Panc1 (cell line): ENCODE measurements at regions of chr3 and their contacts with region 1.

Region 1: DNA sequence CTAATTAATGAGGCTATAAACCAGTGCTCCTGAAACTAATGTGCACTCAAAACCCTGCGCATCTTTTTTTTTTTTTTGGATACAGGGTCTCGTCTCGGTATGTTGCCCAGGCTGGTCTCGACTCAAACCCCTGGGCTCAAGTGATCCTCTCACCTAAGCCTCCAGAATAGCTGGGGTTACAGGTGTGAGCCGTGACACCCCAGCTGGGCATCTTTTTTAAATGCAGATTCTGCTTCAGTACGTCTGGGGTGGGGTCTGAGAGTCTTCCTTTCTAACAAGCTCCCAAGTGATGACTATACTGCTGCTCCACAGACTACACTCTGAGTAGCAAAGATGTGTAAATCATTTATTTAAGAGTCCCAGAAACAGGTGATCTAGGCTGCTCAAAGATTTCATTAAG is 73.0 kb downstream of the BFSP2 start:
- DNase-seq: no peak
- ATAC-seq: no peak
- H3K4me3 ChIP-seq: no peak overlapping the region
- H3K27ac ChIP-seq: peak overlapping the region; percentile 4; the same call in 1 of the 2 replicates
- H3K4me1 ChIP-seq: peaks cover 29% of the 10 kb centered on the region
- H3K27me3 ChIP-seq: no peaks in the 10 kb centered on the region
- CTCF ChIP-seq: no peak

Region 2: DNA sequence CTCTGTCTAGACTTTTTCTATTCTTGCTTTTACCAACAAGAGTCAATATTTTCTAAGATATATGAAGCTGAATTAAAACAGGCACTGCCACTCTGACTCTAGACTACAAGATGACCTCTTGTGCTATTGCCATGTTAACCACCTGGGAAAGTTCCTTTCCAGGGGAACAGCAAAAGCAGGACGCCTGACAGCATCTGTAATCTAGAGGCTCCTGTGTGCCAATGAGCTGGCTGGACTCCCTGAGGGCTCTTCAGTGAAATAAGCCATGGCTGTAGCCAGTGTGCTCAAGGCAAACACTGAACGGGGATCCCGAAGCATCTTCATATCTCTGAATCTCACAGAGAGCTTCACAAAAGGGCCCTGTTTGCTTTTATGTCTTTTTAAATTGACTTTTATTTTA is 15.9 kb before region 1 on chr3:
- CTCF ChIA-PET with region 1: no interaction called
- POLR2A ChIA-PET with region 1: interaction called, 13 read pairs
- in situ Hi-C with region 1: no loop called
- intact Hi-C with region 1: no loop called
- DNase-seq: no peak
- ATAC-seq: no peak
- H3K4me3 ChIP-seq: no peak overlapping the region
- H3K27ac ChIP-seq: peak overlapping the region; percentile 100
- H3K4me1 ChIP-seq: peaks cover 83% of the 10 kb centered on the region
- H3K27me3 ChIP-seq: no peaks in the 10 kb centered on the region
- CTCF ChIP-seq: no peak